Naive thymus-derived CD4-positive, alpha-beta T cell (primary cell): ENCODE measurements at regions of chr1 and their contacts with region 1.

Region 1: GRCh38 chr1:161098210-161099068 is at the start of gene KLHDC9:
- DNase-seq: peak; percentile 29 to 68 (median 42)
- ATAC-seq: peak; percentile 57
- H3K4me3 ChIP-seq: peak within 1 kb of the TSS; percentile 81
- H3K4me3 Mint-ChIP-seq: peak within 1 kb of the TSS; percentile 81 to 94 (median 90)
- H3K27ac ChIP-seq: peak within 1 kb of the TSS; percentile 47
- H3K27ac Mint-ChIP-seq: peak within 1 kb of the TSS; percentile 87 to 100 (median 96)
- H3K4me1 ChIP-seq: peaks cover 9 to 11% of the 10 kb centered on the region in 2 donors
- H3K4me1 Mint-ChIP-seq: peaks cover 18 to 40% (median 23%) of the 10 kb centered on the region in 7 donors
- H3K27me3 ChIP-seq: no peaks in the 10 kb centered on the region
- H3K27me3 Mint-ChIP-seq: peaks cover 0 to 12% (median 0%) of the 10 kb centered on the region in 5 donors
- total RNA-seq, gene KLHDC9: 0.40 to 1.1 TPM in 2 of 5 experiments, not detected in the others

Region 2: GRCh38 chr1:161021165-161021960 is 77.1 kb before region 1 on chr1:
- CTCF ChIA-PET with region 1: interaction called, 10 read pairs
- POLR2A ChIA-PET with region 1: interaction called, 16 read pairs
- intact Hi-C with region 1: no loop called
- DNase-seq: peak; percentile 72 to 97 (median 88)
- ATAC-seq: peak; percentile 98
- H3K4me3 ChIP-seq: peak overlapping the region; percentile 75
- H3K4me3 Mint-ChIP-seq: peak overlapping the region; percentile 87 to 97 (median 91)
- H3K27ac ChIP-seq: peak overlapping the region; percentile 72
- H3K27ac Mint-ChIP-seq: peak overlapping the region; percentile 79 to 96 (median 93)
- H3K4me1 ChIP-seq: peaks cover 11 to 17% of the 10 kb centered on the region in 2 donors
- H3K4me1 Mint-ChIP-seq: peaks cover 24 to 50% (median 48%) of the 10 kb centered on the region in 7 donors
- H3K27me3 ChIP-seq: no peaks in the 10 kb centered on the region
- H3K27me3 Mint-ChIP-seq: no peaks in the 10 kb centered on the region

Region 3: DNA sequence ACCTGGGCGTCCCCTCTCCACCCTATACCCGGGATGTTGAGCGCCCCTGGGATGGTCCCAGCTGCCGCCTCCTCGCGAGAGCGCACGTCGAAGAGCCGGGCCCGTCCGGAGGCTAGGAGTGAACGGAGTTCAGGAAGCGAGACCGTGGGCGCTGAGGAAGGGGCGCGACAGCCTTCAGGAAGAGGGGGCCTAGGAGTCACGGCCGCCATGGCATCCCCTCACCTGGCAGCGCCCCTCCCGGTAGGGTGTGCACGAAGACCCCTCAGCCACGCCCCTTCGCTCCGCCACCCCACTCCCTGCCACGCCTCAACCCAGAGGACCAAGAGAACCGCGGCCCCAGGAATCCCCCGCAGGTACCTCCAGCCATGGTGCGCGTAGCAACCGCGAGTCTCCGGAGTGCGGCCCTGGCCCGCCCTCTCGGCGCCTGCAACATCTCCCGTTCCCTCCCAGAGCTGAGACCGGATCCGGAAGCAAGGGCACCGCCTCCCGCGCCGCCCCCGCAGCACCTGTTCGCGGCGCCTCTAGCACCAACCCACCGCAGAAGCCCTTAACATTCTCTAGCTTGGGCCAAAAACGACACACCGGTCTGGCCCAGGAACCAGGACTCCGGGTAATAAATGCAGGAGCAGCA is 59.8 kb before region 1 on chr1 and contains the start of gene TSTD1:
- CTCF ChIA-PET with region 1: interaction called, 74 read pairs
- POLR2A ChIA-PET with region 1: interaction called, 106 read pairs
- intact Hi-C with region 1: loop called (anchors 1 kb)
- DNase-seq: peak; percentile 70 to 90 (median 88)
- ATAC-seq: peak; percentile 95
- H3K4me3 ChIP-seq: peak within 1 kb of the TSS; percentile 95
- H3K4me3 Mint-ChIP-seq: peak within 1 kb of the TSS; percentile 88 to 94 (median 92)
- H3K27ac ChIP-seq: peak within 1 kb of the TSS; percentile 93
- H3K27ac Mint-ChIP-seq: peak within 1 kb of the TSS; percentile 91 to 97 (median 94)
- H3K4me1 ChIP-seq: peaks cover 16 to 32% of the 10 kb centered on the region in 2 donors
- H3K4me1 Mint-ChIP-seq: peaks cover 25 to 57% (median 37%) of the 10 kb centered on the region in 7 donors
- H3K27me3 ChIP-seq: no peaks in the 10 kb centered on the region
- H3K27me3 Mint-ChIP-seq: no peaks in the 10 kb centered on the region
- total RNA-seq, gene TSTD1: 49.8 to 84.0 (median 58.2) TPM

Region 4: DNA sequence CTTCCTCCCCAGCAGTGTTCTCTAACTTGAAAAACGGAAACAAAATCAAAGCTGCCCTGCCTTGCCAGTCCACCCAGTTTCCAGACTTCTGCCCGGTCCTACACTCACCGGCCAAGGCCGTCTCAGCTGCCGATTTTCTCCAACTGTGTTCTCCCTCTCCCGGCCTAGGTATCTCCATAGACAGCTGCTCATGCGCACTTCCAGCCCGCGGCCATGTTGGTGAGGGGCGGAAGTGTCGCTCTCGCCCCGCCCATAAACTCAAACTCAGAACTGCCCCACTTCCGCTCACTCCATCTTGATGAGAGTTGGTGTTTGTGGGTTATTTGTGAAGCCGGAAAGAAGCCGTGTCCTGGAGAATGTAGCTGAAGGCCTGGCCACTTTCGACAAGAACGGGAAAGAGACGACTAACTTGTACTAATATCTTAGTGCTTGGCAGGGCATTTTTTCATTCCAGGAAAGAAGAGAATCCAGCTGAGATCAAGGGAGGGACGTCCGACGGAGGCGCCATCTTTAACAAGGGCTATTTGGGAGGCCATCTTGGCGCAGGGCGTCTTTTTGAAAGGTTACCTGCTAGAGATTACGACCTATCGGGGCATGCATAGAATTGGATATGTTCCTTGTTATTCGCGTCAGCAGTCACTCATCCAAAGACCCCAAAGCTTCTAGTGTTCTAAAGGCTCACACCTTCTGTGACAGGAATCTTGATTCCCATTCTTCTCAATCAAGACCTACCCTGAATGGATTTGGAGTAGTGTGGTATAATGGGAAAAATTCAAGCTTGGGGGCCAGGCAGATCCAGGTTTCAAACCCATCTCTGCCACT is 52.5 kb before region 1 on chr1 and contains the start of gene USF1:
- CTCF ChIA-PET with region 1: interaction called, 74 read pairs
- POLR2A ChIA-PET with region 1: interaction called, 106 read pairs
- intact Hi-C with region 1: loop called (anchors 1 kb)
- DNase-seq: peak; percentile 84 to 96 (median 93)
- ATAC-seq: peak; percentile 89
- H3K4me3 ChIP-seq: peak within 1 kb of the TSS; percentile 93
- H3K4me3 Mint-ChIP-seq: peak within 1 kb of the TSS; percentile 93 to 100 (median 97)
- H3K27ac ChIP-seq: peak within 1 kb of the TSS; percentile 92
- H3K27ac Mint-ChIP-seq: peak within 1 kb of the TSS; percentile 92 to 100 (median 99)
- H3K4me1 ChIP-seq: peaks cover 17 to 23% of the 10 kb centered on the region in 2 donors
- H3K4me1 Mint-ChIP-seq: peaks cover 41 to 54% (median 49%) of the 10 kb centered on the region in 7 donors
- H3K27me3 ChIP-seq: no peaks in the 10 kb centered on the region
- H3K27me3 Mint-ChIP-seq: no peaks in the 10 kb centered on the region
- total RNA-seq, gene USF1: 71.6 to 115 (median 91.7) TPM

Region 5: GRCh38 chr1:161117759-161118581 is 19.5 kb after region 1 on chr1 and contains the starts of genes NIT1 and PFDN2:
- CTCF ChIA-PET with region 1: interaction called, 3 read pairs
- POLR2A ChIA-PET with region 1: interaction called, 4 read pairs
- intact Hi-C with region 1: loop called (anchors 2 kb)
- DNase-seq: peak; percentile 76 to 90 (median 85)
- ATAC-seq: peak; percentile 86
- H3K4me3 ChIP-seq: peak within 1 kb of the TSS; percentile 99
- H3K4me3 Mint-ChIP-seq: peak within 1 kb of the TSS; percentile 92 to 99 (median 95)
- H3K27ac ChIP-seq: peak within 1 kb of the TSS; percentile 92
- H3K27ac Mint-ChIP-seq: peak within 1 kb of the TSS; percentile 57 to 99 (median 93)
- H3K4me1 ChIP-seq: peaks cover 31 to 35% of the 10 kb centered on the region in 2 donors
- H3K4me1 Mint-ChIP-seq: peaks cover 44 to 82% (median 78%) of the 10 kb centered on the region in 7 donors
- H3K27me3 ChIP-seq: no peaks in the 10 kb centered on the region
- H3K27me3 Mint-ChIP-seq: no peaks in the 10 kb centered on the region
- total RNA-seq, gene NIT1: 23.3 to 49.6 (median 41.8) TPM
- total RNA-seq, gene PFDN2: 32.0 to 67.9 (median 34.0) TPM

Region 6: GRCh38 chr1:161139765-161140164 is 41.3 kb after region 1 on chr1:
- CTCF ChIA-PET with region 1: interaction called, 9 read pairs
- POLR2A ChIA-PET with region 1: no interaction called
- intact Hi-C with region 1: loop called in 1 of 2 experiments (anchors 1 kb)
- DNase-seq: peak in 5 of 9 donors; percentile 40 to 58 (median 50)
- ATAC-seq: peak; percentile 73
- H3K4me3 ChIP-seq: no peak overlapping the region
- H3K4me3 Mint-ChIP-seq: no peak overlapping the region
- H3K27ac ChIP-seq: no peak overlapping the region
- H3K27ac Mint-ChIP-seq: peak overlapping the region in 1 of 9 donors; percentile 54
- H3K4me1 ChIP-seq: no peaks in the 10 kb centered on the region
- H3K4me1 Mint-ChIP-seq: peaks cover 4 to 17% (median 10%) of the 10 kb centered on the region in 7 donors
- H3K27me3 ChIP-seq: no peaks in the 10 kb centered on the region
- H3K27me3 Mint-ChIP-seq: no peaks in the 10 kb centered on the region